ENCODE measurements at regions of chr6 and their contacts with region 1.

Region 1: GRCh38 chr6:149934249-149935156 is 7.3 kb upstream of the ULBP2 start:
- DNase-seq: peak; percentile 54
- ATAC-seq: peak; percentile 63 to 69

Region 2: GRCh38 chr6:150016324-150017185 is 82.1 kb after region 1 on chr6:
- intact Hi-C with region 1: loop called (anchors 1 to 5 kb)
- DNase-seq: peak; percentile 52
- ATAC-seq: peak; percentile 81 to 82

Measured in left cardiac atrium (tissue), 4 donors.